ENCODE measurements at regions of chr20 and their contacts with region 1.

Region 1: DNA sequence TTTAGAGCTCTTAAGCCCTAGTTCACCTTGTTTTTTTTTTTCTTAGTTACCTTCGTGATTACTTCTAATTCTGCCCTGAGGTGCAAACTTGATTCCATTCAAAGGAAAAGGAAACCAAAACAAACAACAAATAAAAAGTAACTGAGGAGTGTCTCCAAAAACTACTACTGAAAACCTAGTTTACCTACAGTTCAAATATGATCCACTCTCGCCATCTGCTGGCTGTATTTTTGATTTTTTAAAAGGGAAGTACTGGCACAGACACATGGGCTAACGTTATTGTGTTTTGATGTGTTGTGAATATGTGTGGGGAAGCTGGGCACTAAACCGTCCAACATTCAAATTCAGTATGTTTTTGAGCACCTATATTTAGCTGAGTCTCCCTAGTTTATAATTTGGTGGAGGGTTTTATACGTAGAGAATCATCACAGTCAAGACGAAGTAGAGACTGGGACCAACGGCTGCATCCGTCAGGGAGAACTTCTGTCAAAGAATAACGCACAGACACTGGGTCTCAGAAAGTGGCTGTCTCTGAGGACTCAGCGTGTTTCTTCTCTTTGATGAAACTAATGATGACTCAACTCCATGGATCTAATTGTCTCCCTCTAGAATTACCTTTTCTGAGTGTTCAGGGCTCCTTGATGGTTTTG is 373.5 kb upstream of the BTBD3 start:
- DNase-seq: peak; percentile 55 to 84
- ATAC-seq: peak; percentile 85 to 93
- H3K4me3 ChIP-seq: no peak overlapping the region
- H3K27ac ChIP-seq: peak overlapping the region; percentile 75 to 83
- H3K4me1 ChIP-seq: peaks cover 22% of the 10 kb centered on the region
- CTCF ChIP-seq: peak; percentile 95
- EP300 ChIP-seq: no peak
- POLR2A ChIP-seq: no peak
- RAD21 ChIP-seq: peak; percentile 98

Region 2: GRCh38 chr20:10553326-10553984 is 990.7 kb before region 1 on chr20:
- CTCF ChIA-PET with region 1: interaction called, 23 read pairs
- POLR2A ChIA-PET with region 1: no interaction called
- DNase-seq: peak; percentile 54 to 85
- ATAC-seq: peak; percentile 70 to 84; a peak in 5 of 6 replicates
- H3K4me3 ChIP-seq: no peak overlapping the region
- H3K27ac ChIP-seq: peak overlapping the region; percentile 37 to 46; a peak in 4 of 6 replicates
- H3K4me1 ChIP-seq: peaks cover 55% of the 10 kb centered on the region
- CTCF ChIP-seq: peak; percentile 97
- EP300 ChIP-seq: no peak
- POLR2A ChIP-seq: no peak
- RAD21 ChIP-seq: peak; percentile 98 to 99

Region 3: GRCh38 chr20:11204926-11205768 is 339.0 kb before region 1 on chr20:
- CTCF ChIA-PET with region 1: interaction called, 14 read pairs
- POLR2A ChIA-PET with region 1: interaction called, 3 read pairs
- DNase-seq: peak; percentile 53 to 89
- ATAC-seq: peak; percentile 62 to 76
- H3K4me3 ChIP-seq: no peak overlapping the region
- H3K27ac ChIP-seq: peak overlapping the region; percentile 82 to 87
- H3K4me1 ChIP-seq: peaks cover 61% of the 10 kb centered on the region
- CTCF ChIP-seq: peak; percentile 89
- EP300 ChIP-seq: no peak
- POLR2A ChIP-seq: no peak
- RAD21 ChIP-seq: peak; percentile 84 to 91

Region 4: GRCh38 chr20:11267131-11267761 is 276.9 kb before region 1 on chr20:
- CTCF ChIA-PET with region 1: interaction called, 16 read pairs
- POLR2A ChIA-PET with region 1: no interaction called
- DNase-seq: peak; percentile 93 to 97
- ATAC-seq: peak; percentile 93 to 97
- H3K4me3 ChIP-seq: no peak overlapping the region
- H3K27ac ChIP-seq: peak overlapping the region; percentile 75 to 87
- H3K4me1 ChIP-seq: peaks cover 43% of the 10 kb centered on the region
- CTCF ChIP-seq: no peak; the same call in 2 of the 3 replicates
- EP300 ChIP-seq: peak; percentile 86 to 87; a peak in 4 of 5 replicates
- POLR2A ChIP-seq: no peak
- RAD21 ChIP-seq: peak; percentile 60 to 82

Region 5: GRCh38 chr20:11287126-11287525 is 257.0 kb before region 1 on chr20:
- CTCF ChIA-PET with region 1: interaction called, 12 read pairs
- POLR2A ChIA-PET with region 1: no interaction called
- DNase-seq: no peak
- ATAC-seq: no peak
- H3K4me3 ChIP-seq: no peak overlapping the region
- H3K27ac ChIP-seq: no peak overlapping the region
- H3K4me1 ChIP-seq: no peaks in the 10 kb centered on the region
- CTCF ChIP-seq: no peak
- EP300 ChIP-seq: no peak
- POLR2A ChIP-seq: no peak
- RAD21 ChIP-seq: no peak

Region 6: DNA sequence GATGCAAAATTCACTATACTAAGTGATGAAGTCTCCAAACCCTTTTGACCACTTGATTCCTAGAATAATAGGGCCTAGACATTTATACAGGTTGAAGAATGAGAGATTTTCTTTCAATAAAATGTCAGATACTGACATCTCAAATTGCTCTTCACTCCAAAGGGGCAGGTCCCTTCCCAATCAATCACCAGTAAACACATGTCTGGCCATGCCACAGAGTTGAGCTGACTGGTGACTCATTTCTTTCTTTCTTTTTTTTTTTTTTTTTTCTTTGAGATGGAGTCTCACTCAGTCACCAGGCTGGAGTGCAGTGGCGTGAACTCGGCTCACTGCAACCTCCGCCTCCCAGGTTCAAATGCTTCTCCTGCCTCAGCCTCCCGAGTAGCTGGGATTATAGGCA is 15.1 kb before region 1 on chr20:
- CTCF ChIA-PET with region 1: interaction called, 25 read pairs
- POLR2A ChIA-PET with region 1: no interaction called
- DNase-seq: no peak
- ATAC-seq: no peak
- H3K4me3 ChIP-seq: no peak overlapping the region
- H3K27ac ChIP-seq: no peak overlapping the region
- H3K4me1 ChIP-seq: no peaks in the 10 kb centered on the region
- CTCF ChIP-seq: no peak
- EP300 ChIP-seq: no peak
- POLR2A ChIP-seq: no peak
- RAD21 ChIP-seq: no peak